ENCODE measurements at regions of chr1 and their contacts with region 1.

Region 1: GRCh38 chr1:212291505-212292134 is 6.4 kb downstream of the PPP2R5A start:
- DNase-seq: no peak
- ATAC-seq: peak; percentile 56 to 82 (median 74)
- H3K4me3 ChIP-seq: peak overlapping the region in 1 of 10 donors; percentile 9
- H3K27ac ChIP-seq: peak overlapping the region in 4 of 10 donors; percentile 4 to 98 (median 9)
- H3K4me1 ChIP-seq: peaks cover 0 to 100% (median 80%) of the 10 kb centered on the region in 9 donors
- H3K27me3 ChIP-seq: no peaks in the 10 kb centered on the region
- CTCF ChIP-seq: peak in 7 of 9 donors; percentile 54 to 78 (median 68)

Region 2: DNA sequence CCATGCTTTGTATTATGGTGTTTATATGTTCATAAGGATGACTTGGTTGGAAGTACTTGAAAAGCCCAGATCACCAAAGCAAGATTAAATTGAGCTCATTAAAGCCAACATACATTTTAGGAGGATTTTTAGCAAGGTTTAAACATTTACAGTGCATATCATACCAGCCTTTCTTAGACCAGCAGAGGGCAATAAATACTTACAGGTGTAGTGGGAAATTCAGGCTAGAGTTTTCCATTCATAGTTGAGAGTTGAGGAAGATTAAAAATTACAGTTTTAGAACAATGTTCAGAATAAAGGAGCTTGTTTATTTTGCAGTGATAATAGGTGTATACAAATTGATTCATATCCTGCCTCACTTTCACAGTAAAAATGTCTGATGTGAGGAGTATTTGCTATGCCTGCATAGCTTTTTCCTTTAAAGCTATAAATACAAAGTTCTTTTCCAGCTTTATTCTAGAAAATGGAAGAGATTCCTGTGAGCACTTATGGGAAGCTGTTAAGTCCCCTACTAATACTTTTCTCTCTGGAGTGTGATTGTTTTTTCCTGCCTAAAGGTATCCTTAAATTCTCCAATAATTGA is 220.8 kb before region 1 on chr1:
- intact Hi-C with region 1: loop called (anchors 2 to 5 kb)
- DNase-seq: no peak
- ATAC-seq: peak; percentile 52 to 83 (median 58)
- H3K4me3 ChIP-seq: no peak overlapping the region
- H3K27ac ChIP-seq: peak overlapping the region in 2 of 10 donors; percentile 0 to 58
- H3K4me1 ChIP-seq: peaks cover 0 to 39% (median 9%) of the 10 kb centered on the region in 9 donors
- H3K27me3 ChIP-seq: no peaks in the 10 kb centered on the region
- CTCF ChIP-seq: peak; percentile 66 to 91 (median 81)

Region 3: GRCh38 chr1:212256369-212256768 is 35.3 kb before region 1 on chr1:
- intact Hi-C with region 1: no loop called
- DNase-seq: no peak
- ATAC-seq: peak in 7 of 8 donors; percentile 25 to 61 (median 53)
- H3K4me3 ChIP-seq: no peak overlapping the region
- H3K27ac ChIP-seq: peak overlapping the region in 1 of 10 donors; percentile 78
- H3K4me1 ChIP-seq: peaks cover 0 to 49% (median 7%) of the 10 kb centered on the region in 9 donors
- H3K27me3 ChIP-seq: no peaks in the 10 kb centered on the region
- CTCF ChIP-seq: no peak

Region 4: DNA sequence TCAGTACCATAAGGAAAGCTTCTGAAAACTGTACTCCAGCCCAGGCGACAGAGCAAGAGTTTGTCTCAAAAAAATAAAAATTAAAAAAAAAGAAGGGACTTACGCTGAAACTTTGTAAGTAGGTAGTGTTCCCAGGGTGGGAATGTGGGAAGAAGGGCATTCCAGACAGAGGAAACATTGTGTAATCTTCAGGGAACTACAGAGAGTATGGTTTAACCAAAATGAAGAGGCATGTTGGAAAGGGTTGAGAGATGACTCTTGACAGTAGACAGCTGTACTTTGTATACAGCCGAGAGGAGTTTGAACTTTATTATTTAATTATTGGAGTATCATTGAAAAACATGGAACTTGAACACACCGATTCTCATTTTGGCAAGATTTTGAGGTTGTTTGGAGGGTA is 36.6 kb after region 1 on chr1:
- intact Hi-C with region 1: loop called in 1 of 10 experiments (anchors 5 kb)
- DNase-seq: no peak
- ATAC-seq: peak in 2 of 8 donors; percentile 25 to 66
- H3K4me3 ChIP-seq: no peak overlapping the region
- H3K27ac ChIP-seq: no peak overlapping the region
- H3K4me1 ChIP-seq: peaks cover 0 to 37% (median 3%) of the 10 kb centered on the region in 9 donors
- H3K27me3 ChIP-seq: no peaks in the 10 kb centered on the region
- CTCF ChIP-seq: no peak

Region 5: DNA sequence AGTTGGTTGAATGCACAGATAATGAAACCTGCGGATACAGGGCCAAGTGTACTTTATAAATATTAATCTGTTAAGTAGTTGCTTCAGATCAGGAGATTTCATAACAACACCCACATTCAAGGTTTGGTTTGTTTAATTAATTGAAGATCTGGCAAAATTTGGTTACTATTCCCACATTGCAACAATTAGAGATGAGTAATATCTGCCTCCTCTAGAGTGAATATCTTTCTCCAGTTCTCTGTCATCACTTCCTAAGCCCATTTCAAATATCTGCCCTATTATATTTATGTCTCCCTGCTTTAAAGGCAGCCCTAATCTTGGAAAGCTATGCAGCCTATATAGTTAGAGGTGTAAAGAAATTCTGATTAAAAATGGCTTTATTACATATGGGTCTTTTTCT is 55.0 kb after region 1 on chr1:
- intact Hi-C with region 1: no loop called
- DNase-seq: no peak
- ATAC-seq: no peak
- H3K4me3 ChIP-seq: no peak overlapping the region
- H3K27ac ChIP-seq: no peak overlapping the region
- H3K4me1 ChIP-seq: peaks cover 0 to 6% (median 0%) of the 10 kb centered on the region in 9 donors
- H3K27me3 ChIP-seq: no peaks in the 10 kb centered on the region
- CTCF ChIP-seq: no peak

Region 6: DNA sequence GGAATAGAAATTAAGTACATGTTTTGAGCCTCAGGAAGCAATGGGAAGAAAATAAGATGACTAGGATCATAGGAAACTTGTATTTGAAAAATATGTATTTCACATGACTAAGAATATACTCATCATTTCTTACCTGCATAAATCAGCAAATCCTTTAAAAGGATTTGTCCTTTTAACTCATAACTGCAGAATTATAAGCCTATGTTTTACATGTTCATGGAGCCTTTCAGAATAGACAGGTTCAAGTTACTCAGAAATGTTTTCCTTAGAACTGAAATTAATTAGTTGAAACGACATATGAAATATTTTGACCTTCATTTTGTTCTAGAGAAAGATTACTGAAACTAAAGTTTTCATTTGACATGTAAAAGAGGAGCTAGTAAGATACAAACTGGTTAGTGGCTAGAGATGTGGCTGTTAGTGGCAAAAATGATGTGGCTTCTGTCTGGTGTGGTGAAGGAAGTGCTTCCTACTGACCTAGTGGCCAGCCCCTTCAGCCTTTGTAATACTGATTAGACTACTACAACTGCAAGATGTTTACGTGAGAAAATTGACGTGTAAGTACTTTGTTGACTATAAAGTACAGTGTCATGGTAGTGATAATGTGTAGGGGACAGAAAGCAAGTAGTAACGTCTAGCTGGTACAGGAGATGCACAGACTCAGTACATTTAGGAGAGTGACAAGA is 68.3 kb after region 1 on chr1:
- intact Hi-C with region 1: loop called in 4 of 10 experiments (anchors 5 kb)
- DNase-seq: no peak
- ATAC-seq: no peak
- H3K4me3 ChIP-seq: no peak overlapping the region
- H3K27ac ChIP-seq: no peak overlapping the region
- H3K4me1 ChIP-seq: peaks cover 0 to 13% (median 11%) of the 10 kb centered on the region in 9 donors
- H3K27me3 ChIP-seq: no peaks in the 10 kb centered on the region
- CTCF ChIP-seq: no peak